H1 (cell line): ENCODE measurements at regions of chr17 and their contacts with region 1.

Region 1: GRCh38 chr17:64025732-64026294 is 5.4 kb upstream of the ICAM2 start:
- DNase-seq: peak; percentile 70 to 85
- H3K4me3 ChIP-seq: peak overlapping the region in 1 of 4 experiments; percentile 20; a peak in 1 of 8 replicates
- H3K27ac ChIP-seq: no peak overlapping the region
- H3K4me1 ChIP-seq: no peaks in the 10 kb centered on the region; a peak in 1 of 7 replicates
- H3K27me3 ChIP-seq: peaks cover 0 to 4% (median 1%) of the 10 kb centered on the region in 4 experiments; a peak in 3 of 7 replicates
- CTCF ChIP-seq: peak; percentile 94 to 99 (median 99)
- EP300 ChIP-seq: peak in 1 of 2 experiments; percentile 34; a peak in 1 of 3 replicates
- POLR2A ChIP-seq: no peak
- RAD21 ChIP-seq: peak; percentile 71 to 78

Region 2: DNA sequence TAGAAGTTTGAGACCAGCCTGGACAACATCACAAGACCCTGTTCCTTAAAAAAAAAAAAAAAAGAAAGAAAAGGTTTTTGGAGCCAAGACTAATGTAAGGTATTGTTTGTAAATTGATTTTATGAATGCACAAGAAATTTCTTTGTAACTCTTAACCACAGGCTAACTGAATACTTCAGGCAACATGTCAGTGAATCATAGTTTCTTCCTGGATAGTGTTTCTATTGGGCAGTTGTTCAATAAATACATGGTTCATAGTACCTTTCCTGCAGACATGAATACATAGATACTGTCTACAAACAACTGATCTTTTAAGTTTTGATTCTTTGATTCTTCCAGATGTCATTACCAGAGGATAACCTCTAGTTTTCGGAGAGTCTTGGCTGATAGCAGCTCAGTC is 240.3 kb before region 1 on chr17:
- CTCF ChIA-PET with region 1: no interaction called
- POLR2A ChIA-PET with region 1: no interaction called
- DNase-seq: no peak
- H3K4me3 ChIP-seq: no peak overlapping the region
- H3K27ac ChIP-seq: no peak overlapping the region
- H3K4me1 ChIP-seq: no peaks in the 10 kb centered on the region
- H3K27me3 ChIP-seq: no peaks in the 10 kb centered on the region
- CTCF ChIP-seq: no peak
- EP300 ChIP-seq: no peak
- POLR2A ChIP-seq: no peak
- RAD21 ChIP-seq: no peak

Region 3: GRCh38 chr17:63919311-63919723 is 106.5 kb before region 1 on chr17:
- CTCF ChIA-PET with region 1: interaction called, 59 read pairs
- POLR2A ChIA-PET with region 1: interaction called, 3 read pairs
- DNase-seq: peak in 1 of 2 experiments; percentile 85
- H3K4me3 ChIP-seq: no peak overlapping the region
- H3K27ac ChIP-seq: no peak overlapping the region
- H3K4me1 ChIP-seq: peaks cover 0 to 5% (median under 1%) of the 10 kb centered on the region in 4 experiments; a peak in 3 of 7 replicates
- H3K27me3 ChIP-seq: no peaks in the 10 kb centered on the region
- CTCF ChIP-seq: peak; percentile 88 to 94 (median 89)
- EP300 ChIP-seq: no peak
- POLR2A ChIP-seq: no peak
- RAD21 ChIP-seq: peak; percentile 89 to 94

Region 4: GRCh38 chr17:63984651-63985386 is 41.0 kb before region 1 on chr17:
- CTCF ChIA-PET with region 1: interaction called, 15 read pairs
- POLR2A ChIA-PET with region 1: no interaction called
- DNase-seq: no peak
- H3K4me3 ChIP-seq: no peak overlapping the region
- H3K27ac ChIP-seq: no peak overlapping the region
- H3K4me1 ChIP-seq: peaks cover 0 to 17% (median 9%) of the 10 kb centered on the region in 4 experiments; a peak in 6 of 7 replicates
- H3K27me3 ChIP-seq: no peaks in the 10 kb centered on the region; a peak in 1 of 7 replicates
- CTCF ChIP-seq: no peak
- EP300 ChIP-seq: no peak
- POLR2A ChIP-seq: no peak
- RAD21 ChIP-seq: no peak

Region 5: DNA sequence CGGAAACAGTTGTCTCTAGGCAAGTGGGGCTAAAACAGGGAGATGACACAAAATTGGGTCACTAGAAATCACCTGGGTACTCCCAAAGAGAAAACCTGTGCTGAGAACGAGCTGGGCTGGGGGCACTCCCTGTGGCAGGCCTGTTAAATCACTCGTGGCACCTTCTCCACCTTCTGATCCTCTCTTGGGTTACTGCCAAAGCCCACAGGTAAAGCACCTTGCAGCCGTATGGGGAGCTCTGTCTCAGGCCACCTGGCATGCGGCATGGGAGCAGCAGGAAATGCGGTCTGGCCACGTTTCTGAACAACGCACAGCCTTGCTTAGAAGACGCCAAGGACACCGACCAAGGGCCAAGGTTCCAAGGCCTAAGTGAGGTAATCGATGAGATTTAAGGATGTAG is 16.1 kb after region 1 on chr17:
- CTCF ChIA-PET with region 1: interaction called, 105 read pairs
- POLR2A ChIA-PET with region 1: interaction called, 3 read pairs
- DNase-seq: no peak
- H3K4me3 ChIP-seq: no peak overlapping the region
- H3K27ac ChIP-seq: no peak overlapping the region
- H3K4me1 ChIP-seq: no peaks in the 10 kb centered on the region
- H3K27me3 ChIP-seq: no peaks in the 10 kb centered on the region
- CTCF ChIP-seq: no peak
- EP300 ChIP-seq: no peak
- POLR2A ChIP-seq: no peak
- RAD21 ChIP-seq: no peak

Region 6: DNA sequence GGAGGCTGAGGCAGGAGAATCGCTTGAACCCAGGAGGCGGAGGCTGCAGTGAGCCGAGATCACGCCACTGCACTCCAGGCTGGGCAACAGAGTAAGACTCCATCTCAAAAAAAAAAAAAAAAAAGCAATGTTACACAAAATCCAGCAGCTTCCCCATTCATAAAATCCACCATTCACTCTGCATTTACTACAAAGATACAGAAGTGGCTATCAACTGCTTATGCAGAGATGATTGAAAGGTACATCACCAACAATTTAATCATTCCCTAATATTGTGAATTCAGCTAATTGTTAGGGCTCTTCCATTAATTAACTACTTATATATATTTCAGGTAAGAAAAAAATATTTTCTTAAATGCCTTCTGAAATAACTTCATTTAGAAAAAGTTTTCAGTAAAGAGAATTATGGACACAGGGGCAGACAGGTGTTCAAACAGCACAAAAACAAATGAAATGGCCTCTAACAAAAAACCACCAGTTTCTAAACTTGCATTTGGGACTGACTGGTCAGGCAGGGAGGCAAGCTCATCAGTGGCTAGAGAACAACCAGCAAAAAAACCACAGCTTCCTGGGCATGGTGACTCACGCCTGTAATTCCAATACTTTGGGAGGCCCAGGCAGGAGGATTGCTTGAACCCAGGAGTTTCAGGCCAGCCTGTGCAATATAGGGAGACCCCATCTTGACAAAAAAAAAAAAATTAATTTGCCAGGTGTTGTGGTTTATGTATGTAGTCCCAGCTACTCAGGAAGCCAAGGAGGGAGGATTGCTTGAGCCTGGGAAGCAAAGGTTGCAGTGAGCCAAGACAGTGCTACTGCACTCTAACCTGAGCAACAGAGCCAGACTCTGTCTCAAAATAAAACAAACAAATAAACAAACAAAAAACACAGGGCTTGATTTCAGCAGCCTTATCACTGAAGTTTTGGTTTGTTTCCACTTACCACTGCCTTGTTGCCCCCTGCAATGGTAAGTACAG is 77.9 kb after region 1 on chr17:
- CTCF ChIA-PET with region 1: no interaction called
- POLR2A ChIA-PET with region 1: no interaction called
- DNase-seq: no peak
- H3K4me3 ChIP-seq: no peak overlapping the region
- H3K27ac ChIP-seq: no peak overlapping the region
- H3K4me1 ChIP-seq: no peaks in the 10 kb centered on the region
- H3K27me3 ChIP-seq: no peaks in the 10 kb centered on the region
- CTCF ChIP-seq: no peak
- EP300 ChIP-seq: no peak
- POLR2A ChIP-seq: no peak
- RAD21 ChIP-seq: no peak

Region 7: DNA sequence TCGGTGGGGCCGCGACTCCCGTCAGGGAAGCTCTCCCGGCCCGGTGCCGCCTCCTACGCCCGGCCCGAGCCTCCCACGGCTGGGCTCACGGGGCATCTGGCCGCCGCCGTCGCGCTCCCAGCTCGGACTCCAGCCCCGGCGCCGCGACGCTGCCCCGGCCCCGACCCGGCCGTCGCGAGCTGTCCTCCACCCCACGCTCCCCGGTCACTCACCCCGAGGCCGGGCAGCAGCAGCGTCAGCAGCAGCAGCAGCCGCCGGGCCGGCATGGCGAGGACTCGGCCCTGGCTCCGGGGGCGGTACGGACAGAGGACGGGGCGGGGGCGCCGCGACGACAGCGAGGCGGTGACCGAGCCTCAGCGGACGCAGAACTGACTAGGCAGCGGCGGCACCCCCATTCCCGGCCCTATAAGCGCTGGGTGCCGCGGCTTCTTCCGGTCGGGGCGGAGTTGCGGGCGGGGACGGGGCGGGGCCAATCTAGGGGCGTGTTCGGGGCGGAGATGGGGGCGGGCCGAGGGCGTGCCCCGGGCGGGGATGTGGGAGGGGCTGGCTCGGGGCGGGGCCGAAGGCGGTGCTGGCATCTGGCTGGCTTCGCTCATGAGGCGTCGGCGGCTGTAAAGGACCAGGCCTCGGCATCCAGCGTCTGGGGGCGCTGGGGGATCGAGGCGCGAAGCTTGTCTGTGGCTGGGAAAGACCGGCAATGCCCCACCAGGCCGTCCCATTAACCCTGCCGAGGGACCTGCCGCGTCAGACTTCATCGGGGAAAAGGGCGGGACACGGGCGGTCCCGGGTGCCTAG is 104.1 kb after region 1 on chr17 and contains the start of gene ERN1:
- CTCF ChIA-PET with region 1: interaction called, 202 read pairs
- POLR2A ChIA-PET with region 1: interaction called, 3 read pairs
- DNase-seq: peak; percentile 81 to 91
- H3K4me3 ChIP-seq: peak within 1 kb of the TSS; percentile 69 to 79 (median 74)
- H3K27ac ChIP-seq: no peak within 1 kb of the TSS
- H3K4me1 ChIP-seq: no peaks in the 10 kb centered on the region
- H3K27me3 ChIP-seq: peaks cover 0 to 21% (median 11%) of the 10 kb centered on the region in 4 experiments; a peak in 6 of 7 replicates
- CTCF ChIP-seq: 0 out of 4 replicates have a peak, but pooled peaks of 1 of the 3 experiments have one; percentile 11
- EP300 ChIP-seq: no peak
- POLR2A ChIP-seq: peak; percentile 75 to 76
- RAD21 ChIP-seq: peak in 1 of 2 experiments; percentile 5; a peak in 1 of 4 replicates
- total RNA-seq, gene ERN1: 3.9 and 5.7 TPM in 2 replicates